ENCODE measurements at regions of chr12 and their contacts with region 1.

Region 1: GRCh38 chr12:1117970-1118563 is 127.0 kb downstream of the ERC1 start:
- DNase-seq: peak; percentile 84
- H3K4me3 Mint-ChIP-seq: no peak overlapping the region
- H3K27ac Mint-ChIP-seq: no peak overlapping the region
- H3K4me1 Mint-ChIP-seq: peaks cover 19% of the 10 kb centered on the region
- H3K27me3 Mint-ChIP-seq: no peaks in the 10 kb centered on the region

Region 2: GRCh38 chr12:1099158-1099557 is 18.9 kb before region 1 on chr12:
- CTCF ChIA-PET with region 1: interaction called, 49 read pairs
- intact Hi-C with region 1: no loop called
- DNase-seq: peak; percentile 68
- H3K4me3 Mint-ChIP-seq: no peak overlapping the region
- H3K27ac Mint-ChIP-seq: no peak overlapping the region
- H3K4me1 Mint-ChIP-seq: peaks cover 58% of the 10 kb centered on the region
- H3K27me3 Mint-ChIP-seq: no peaks in the 10 kb centered on the region

Region 3: GRCh38 chr12:1130164-1130563 is 12.1 kb after region 1 on chr12:
- CTCF ChIA-PET with region 1: interaction called, 15 read pairs
- intact Hi-C with region 1: no loop called
- DNase-seq: no peak
- H3K4me3 Mint-ChIP-seq: no peak overlapping the region
- H3K27ac Mint-ChIP-seq: no peak overlapping the region
- H3K4me1 Mint-ChIP-seq: peaks cover 24% of the 10 kb centered on the region
- H3K27me3 Mint-ChIP-seq: no peaks in the 10 kb centered on the region

Region 4: GRCh38 chr12:1147821-1148220 is 29.8 kb after region 1 on chr12:
- CTCF ChIA-PET with region 1: interaction called, 10 read pairs
- intact Hi-C with region 1: no loop called
- DNase-seq: no peak
- H3K4me3 Mint-ChIP-seq: no peak overlapping the region
- H3K27ac Mint-ChIP-seq: no peak overlapping the region
- H3K4me1 Mint-ChIP-seq: no peaks in the 10 kb centered on the region
- H3K27me3 Mint-ChIP-seq: no peaks in the 10 kb centered on the region

Region 5: GRCh38 chr12:1533602-1534304 is 415.7 kb after region 1 on chr12:
- CTCF ChIA-PET with region 1: interaction called, 5 read pairs
- intact Hi-C with region 1: loop called (anchors 5 kb)
- DNase-seq: peak; percentile 60
- H3K4me3 Mint-ChIP-seq: peak overlapping the region; percentile 63
- H3K27ac Mint-ChIP-seq: no peak overlapping the region
- H3K4me1 Mint-ChIP-seq: peaks cover 33% of the 10 kb centered on the region
- H3K27me3 Mint-ChIP-seq: peaks cover 61% of the 10 kb centered on the region

Region 6: GRCh38 chr12:1583421-1584078 is 465.5 kb after region 1 on chr12:
- CTCF ChIA-PET with region 1: interaction called, 99 read pairs
- intact Hi-C with region 1: loop called (anchors 1 kb)
- DNase-seq: peak; percentile 83
- H3K4me3 Mint-ChIP-seq: no peak overlapping the region
- H3K27ac Mint-ChIP-seq: no peak overlapping the region
- H3K4me1 Mint-ChIP-seq: peaks cover 19% of the 10 kb centered on the region
- H3K27me3 Mint-ChIP-seq: no peaks in the 10 kb centered on the region

Region 7: DNA sequence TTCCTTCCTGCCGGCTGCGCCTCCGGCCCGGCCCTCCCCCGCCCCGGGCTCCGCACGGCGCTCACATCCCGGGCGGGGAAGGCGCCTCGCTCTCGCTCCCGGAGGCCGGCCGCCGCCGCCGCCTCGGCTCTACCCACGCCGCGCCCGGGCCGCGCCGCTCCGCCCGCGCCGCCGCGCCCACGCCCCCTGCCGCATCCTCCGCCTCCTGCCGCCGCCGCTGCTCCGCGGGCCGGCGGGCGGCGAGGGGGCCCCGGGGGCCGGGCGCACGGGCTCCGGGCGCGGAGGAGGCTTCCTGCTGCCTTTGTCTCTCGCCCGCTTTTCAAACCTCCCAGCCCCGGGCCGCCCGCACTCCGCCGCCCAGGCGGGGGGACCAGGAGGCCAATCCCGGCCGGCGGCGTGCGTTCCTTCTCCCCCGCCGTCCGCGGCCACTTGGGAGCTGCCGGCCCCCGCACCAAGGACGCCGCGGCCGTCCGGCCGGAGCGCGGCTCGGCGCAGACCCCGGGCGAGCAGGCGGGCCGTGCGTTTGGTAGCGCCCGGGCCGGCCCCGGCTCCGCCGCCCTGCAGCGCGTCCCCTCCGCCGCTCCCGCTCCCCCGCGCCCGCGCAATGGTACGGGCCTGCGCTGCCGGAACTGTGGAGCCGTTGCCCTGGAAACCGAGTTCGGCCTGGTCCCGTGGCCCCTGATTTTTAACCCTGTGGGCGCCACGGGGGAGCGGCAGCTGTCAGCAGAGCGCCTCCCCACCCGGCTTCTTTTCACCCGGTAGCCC is 476.4 kb after region 1 on chr12 and contains the start of gene FBXL14:
- CTCF ChIA-PET with region 1: interaction called, 50 read pairs
- intact Hi-C with region 1: no loop called
- DNase-seq: peak; percentile 88
- H3K4me3 Mint-ChIP-seq: peak within 1 kb of the TSS; percentile 94
- H3K27ac Mint-ChIP-seq: peak within 1 kb of the TSS; percentile 88
- H3K4me1 Mint-ChIP-seq: peaks cover 39% of the 10 kb centered on the region
- H3K27me3 Mint-ChIP-seq: no peaks in the 10 kb centered on the region
- total RNA-seq, gene FBXL14: 11.4 to 11.9 TPM

Measured in activated naive CD4-positive, alpha-beta T cell treated with anti-CD3 and anti-CD28 coated beads for 36 hours (primary cell).